ENCODE measurements at regions of chr2 and their contacts with region 1.

Region 1: GRCh38 chr2:86298411-86299379 is 38.7 kb downstream of the REEP1 start:
- DNase-seq: peak; percentile 20
- ATAC-seq: peak; percentile 75
- H3K4me3 Mint-ChIP-seq: no peak overlapping the region
- H3K27ac Mint-ChIP-seq: no peak overlapping the region
- H3K4me1 Mint-ChIP-seq: peaks cover 9% of the 10 kb centered on the region; the same call in 1 of the 2 replicates
- H3K27me3 Mint-ChIP-seq: no peaks in the 10 kb centered on the region
- CTCF ChIP-seq: no peak

Region 2: DNA sequence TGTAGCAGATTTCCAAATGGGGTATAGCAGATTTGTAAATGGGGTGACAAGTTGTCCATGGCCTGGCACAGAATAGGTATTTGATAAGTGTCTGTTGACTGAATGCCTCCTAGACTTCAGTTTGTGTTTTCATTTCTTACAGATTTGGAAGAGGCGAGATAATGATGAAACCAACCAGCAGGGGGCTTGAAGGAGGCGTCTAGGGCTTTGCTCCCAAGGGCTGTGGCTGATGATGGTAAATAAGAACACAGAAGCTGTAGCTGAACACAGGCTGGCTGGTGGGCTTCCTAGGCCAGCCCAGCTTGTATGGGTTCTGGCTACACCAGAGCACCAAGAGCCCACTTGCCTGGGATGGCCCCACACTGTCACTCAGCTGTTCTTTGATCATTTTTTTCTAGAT is 650.1 kb before region 1 on chr2:
- CTCF ChIA-PET with region 1: interaction called, 10 read pairs
- POLR2A ChIA-PET with region 1: no interaction called
- DNase-seq: no peak
- ATAC-seq: no peak
- H3K4me3 Mint-ChIP-seq: no peak overlapping the region
- H3K27ac Mint-ChIP-seq: no peak overlapping the region
- H3K4me1 Mint-ChIP-seq: no peaks in the 10 kb centered on the region
- H3K27me3 Mint-ChIP-seq: no peaks in the 10 kb centered on the region
- CTCF ChIP-seq: no peak; the same call in 1 of the 2 replicates

Region 3: DNA sequence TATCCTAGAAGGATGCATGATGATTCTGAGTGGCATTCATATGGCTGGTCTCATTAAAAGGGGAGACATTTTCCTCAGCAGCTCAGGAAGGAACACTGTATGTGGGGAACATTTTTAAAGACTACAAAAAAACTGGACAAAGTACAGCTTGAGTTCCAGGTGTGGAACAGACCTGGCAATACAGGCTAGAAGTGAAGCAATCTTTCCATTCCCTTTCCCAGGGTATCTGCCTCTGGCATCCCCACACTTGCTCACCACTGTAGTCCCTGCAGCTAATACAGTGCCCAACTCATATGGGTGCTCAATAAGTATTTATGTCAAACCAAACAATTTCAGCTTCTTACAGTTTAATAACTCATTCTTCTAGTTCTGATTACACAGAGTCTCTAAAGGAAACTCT is 316.9 kb after region 1 on chr2:
- CTCF ChIA-PET with region 1: no interaction called
- POLR2A ChIA-PET with region 1: no interaction called
- DNase-seq: no peak
- ATAC-seq: no peak
- H3K4me3 Mint-ChIP-seq: no peak overlapping the region
- H3K27ac Mint-ChIP-seq: no peak overlapping the region
- H3K4me1 Mint-ChIP-seq: no peaks in the 10 kb centered on the region
- H3K27me3 Mint-ChIP-seq: no peaks in the 10 kb centered on the region
- CTCF ChIP-seq: no peak